ENCODE measurements at regions of chr20 and their contacts with region 1.

Region 1: DNA sequence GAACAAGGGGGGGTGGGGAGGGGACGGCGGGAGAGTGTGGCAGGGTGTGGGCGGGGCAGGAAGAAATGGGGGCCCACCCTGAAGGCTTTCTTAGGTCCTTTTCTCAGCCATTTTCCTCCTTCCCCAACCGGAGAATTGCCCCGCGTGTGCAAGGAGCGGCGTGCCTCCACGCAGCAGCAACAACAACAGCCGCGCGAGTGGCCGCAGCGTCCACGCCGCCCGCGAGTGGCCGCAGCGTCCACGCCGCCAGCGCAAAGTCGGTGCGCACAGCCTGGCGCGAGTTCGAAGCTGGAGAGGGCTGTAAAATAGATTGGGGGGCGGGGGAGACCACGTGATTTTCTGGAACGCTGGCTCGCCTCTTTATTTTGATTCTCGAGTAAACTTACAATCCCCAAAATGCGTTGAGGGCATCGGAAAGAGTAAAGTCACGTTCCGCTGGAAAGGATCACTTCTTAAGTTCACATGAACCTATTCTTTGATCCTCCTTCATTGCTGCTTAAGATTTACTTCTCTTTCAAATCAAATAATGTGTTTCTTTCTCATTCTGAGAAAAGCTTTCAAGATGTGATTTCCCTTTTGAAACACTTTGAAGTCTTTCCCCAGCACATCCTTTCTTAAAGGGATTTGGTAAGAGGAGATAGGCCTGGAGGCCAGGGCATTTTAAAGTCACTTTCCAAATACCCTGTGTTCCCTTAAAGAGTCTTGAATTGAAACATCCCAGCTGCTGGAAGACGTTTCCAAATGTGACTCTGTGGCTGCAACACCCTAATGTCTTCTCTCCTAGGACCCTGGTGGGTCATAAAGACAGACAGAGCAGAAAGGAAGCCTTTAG is 66.7 kb upstream of the ZNF217 start:
- DNase-seq: peak in 1 of 2 experiments; percentile 36
- ATAC-seq: peak; percentile 48 to 50; a peak in 3 of 6 replicates
- H3K4me3 ChIP-seq: peak overlapping the region; percentile 48
- H3K27ac ChIP-seq: peak overlapping the region; percentile 83 to 90
- H3K4me1 ChIP-seq: peaks cover 51% of the 10 kb centered on the region
- CTCF ChIP-seq: no peak
- EP300 ChIP-seq: no peak
- POLR2A ChIP-seq: 0 out of 2 replicates have a peak, but pooled peaks have one; percentile 20
- RAD21 ChIP-seq: no peak; a peak in 1 of 5 replicates

Region 2: GRCh38 chr20:53698367-53698978 is 38.2 kb after region 1 on chr20:
- CTCF ChIA-PET with region 1: no interaction called
- POLR2A ChIA-PET with region 1: no interaction called
- DNase-seq: no peak
- ATAC-seq: no peak
- H3K4me3 ChIP-seq: no peak overlapping the region
- H3K27ac ChIP-seq: peak overlapping the region in 1 of 2 experiments; percentile 8; a peak in 1 of 6 replicates
- H3K4me1 ChIP-seq: no peaks in the 10 kb centered on the region; the same call in 2 of the 3 replicates
- CTCF ChIP-seq: no peak
- EP300 ChIP-seq: no peak
- POLR2A ChIP-seq: no peak
- RAD21 ChIP-seq: no peak

Region 3: GRCh38 chr20:53738039-53738944 is 78.0 kb after region 1 on chr20:
- CTCF ChIA-PET with region 1: interaction called, 3 read pairs
- POLR2A ChIA-PET with region 1: interaction called, 11 read pairs
- DNase-seq: peak; percentile 67 to 95
- ATAC-seq: peak; percentile 90 to 91
- H3K4me3 ChIP-seq: peak overlapping the region; percentile 27; the same call in 2 of the 3 replicates
- H3K27ac ChIP-seq: peak overlapping the region; percentile 89 to 90
- H3K4me1 ChIP-seq: peaks cover 72% of the 10 kb centered on the region
- CTCF ChIP-seq: no peak
- EP300 ChIP-seq: no peak
- POLR2A ChIP-seq: peak; percentile 41
- RAD21 ChIP-seq: peak; percentile 13 to 37; a peak in 3 of 5 replicates